Astrocyte of the cerebellum (primary cell): ENCODE measurements at regions of chr3 and their contacts with region 1.

Region 1: DNA sequence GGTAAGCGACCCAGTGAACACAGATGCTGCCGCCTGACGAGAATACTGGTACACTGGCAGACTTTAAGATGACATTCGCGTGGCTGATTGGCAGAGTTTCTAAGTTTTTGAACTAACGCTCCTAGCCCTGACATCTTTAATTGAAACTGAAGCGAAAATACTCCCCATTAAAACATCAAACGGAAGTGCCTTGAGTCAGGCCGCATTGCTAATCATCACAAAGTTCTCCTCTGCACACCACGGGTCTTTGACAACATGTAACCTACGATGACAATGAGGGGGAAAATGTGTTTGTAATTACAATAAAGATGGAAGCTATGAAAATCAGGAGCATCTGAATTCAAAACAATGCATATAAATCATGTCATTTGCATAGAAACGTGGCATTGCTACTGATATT is 44.5 kb downstream of the ATP13A4 start:
- DNase-seq: no peak
- H3K4me3 ChIP-seq: no peak overlapping the region
- CTCF ChIP-seq: no peak

Region 2: DNA sequence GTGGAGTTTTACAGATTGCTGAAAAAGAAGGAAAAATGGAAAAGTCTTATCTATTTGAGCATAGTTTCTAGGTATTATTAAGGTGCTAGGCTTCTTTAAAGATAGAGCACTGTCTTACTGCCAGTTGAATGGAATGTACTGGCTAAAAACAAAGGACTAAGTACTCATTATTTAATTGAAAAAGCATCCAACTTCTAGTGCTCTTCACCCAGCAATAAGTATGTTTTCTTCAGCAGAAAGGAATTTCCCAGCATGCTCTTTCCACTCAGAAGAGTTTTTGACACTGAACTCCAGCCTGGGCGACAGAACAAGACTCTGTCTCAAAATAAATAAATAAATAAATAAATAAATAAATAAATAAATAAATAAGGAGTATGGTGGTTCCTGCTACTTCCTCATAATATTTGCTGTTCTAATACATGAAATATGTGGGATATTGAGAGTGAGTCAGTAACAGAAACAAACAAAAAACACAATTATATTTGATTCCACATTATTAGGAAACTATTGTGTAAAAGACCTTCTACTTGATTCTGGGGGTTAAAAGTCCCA is 26.1 kb before region 1 on chr3:
- in situ Hi-C with region 1: loop called (anchors 5 kb)
- DNase-seq: no peak
- H3K4me3 ChIP-seq: no peak overlapping the region
- CTCF ChIP-seq: no peak

Region 3: GRCh38 chr3:194030369-194030768 is 520.2 kb after region 1 on chr3:
- in situ Hi-C with region 1: no loop called
- DNase-seq: no peak
- H3K4me3 ChIP-seq: no peak overlapping the region
- CTCF ChIP-seq: no peak